ENCODE measurements at regions of chr11 and their contacts with region 1.

Region 1: GRCh38 chr11:113113801-113114706 is 152.8 kb downstream of the NCAM1 start:
- H3K4me3 ChIP-seq: no peak overlapping the region
- H3K27ac ChIP-seq: no peak overlapping the region
- H3K4me1 ChIP-seq: no peaks in the 10 kb centered on the region
- CTCF ChIP-seq: peak; percentile 69

Region 2: GRCh38 chr11:112795142-112795815 is 318.8 kb before region 1 on chr11:
- CTCF ChIA-PET with region 1: interaction called, 15 read pairs
- POLR2A ChIA-PET with region 1: no interaction called
- H3K4me3 ChIP-seq: no peak overlapping the region
- H3K27ac ChIP-seq: no peak overlapping the region
- H3K4me1 ChIP-seq: no peaks in the 10 kb centered on the region
- CTCF ChIP-seq: no peak

Region 3: DNA sequence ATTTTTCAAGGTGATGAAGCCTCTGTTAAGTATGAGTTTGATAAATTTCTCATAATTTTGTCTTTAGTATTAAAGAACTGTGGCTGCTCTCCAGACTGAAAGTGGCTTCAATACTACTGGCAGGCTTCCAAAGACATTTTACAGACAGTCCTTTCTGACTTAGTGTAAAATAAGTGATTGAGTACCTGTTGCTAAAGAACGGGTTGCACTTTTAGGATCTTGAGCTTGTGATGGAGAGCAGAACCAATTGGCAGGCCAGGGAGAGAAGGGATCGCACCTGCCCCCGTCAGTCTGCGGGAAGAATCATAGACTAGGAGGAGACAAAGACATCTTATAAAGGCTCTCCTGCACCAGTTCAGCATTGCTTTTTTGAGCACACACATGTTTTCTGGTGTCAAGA is 148.4 kb before region 1 on chr11:
- CTCF ChIA-PET with region 1: interaction called, 11 read pairs
- POLR2A ChIA-PET with region 1: no interaction called
- H3K4me3 ChIP-seq: no peak overlapping the region
- H3K27ac ChIP-seq: no peak overlapping the region
- H3K4me1 ChIP-seq: peaks cover 11% of the 10 kb centered on the region
- CTCF ChIP-seq: no peak

Region 4: DNA sequence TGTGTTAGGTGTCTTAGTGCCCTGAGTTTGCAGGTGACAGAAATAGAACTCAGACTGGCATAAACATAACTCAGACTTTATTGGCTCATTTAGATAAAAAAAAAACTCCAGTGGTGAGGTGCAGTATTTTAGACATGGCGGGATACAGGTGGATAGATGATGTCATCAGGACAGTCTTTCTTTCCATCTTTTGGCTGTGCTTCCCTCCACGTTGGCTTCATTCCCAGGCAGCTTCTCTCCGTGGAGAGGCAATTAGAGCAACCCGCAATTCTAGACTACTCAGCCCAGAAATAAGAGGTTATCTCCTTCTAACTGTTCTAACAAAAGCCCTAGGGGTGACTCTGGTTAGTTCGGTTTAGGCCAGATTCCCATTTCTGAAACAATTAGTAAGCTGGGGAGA is 112.3 kb before region 1 on chr11:
- CTCF ChIA-PET with region 1: no interaction called
- POLR2A ChIA-PET with region 1: no interaction called
- H3K4me3 ChIP-seq: no peak overlapping the region
- H3K27ac ChIP-seq: no peak overlapping the region
- H3K4me1 ChIP-seq: no peaks in the 10 kb centered on the region
- CTCF ChIP-seq: no peak

Region 5: GRCh38 chr11:113222241-113222640 is 108.2 kb after region 1 on chr11:
- CTCF ChIA-PET with region 1: no interaction called
- POLR2A ChIA-PET with region 1: no interaction called
- H3K4me3 ChIP-seq: no peak overlapping the region
- H3K27ac ChIP-seq: no peak overlapping the region
- H3K4me1 ChIP-seq: no peaks in the 10 kb centered on the region
- CTCF ChIP-seq: no peak

Region 6: GRCh38 chr11:113289431-113290187 is 175.6 kb after region 1 on chr11:
- CTCF ChIA-PET with region 1: interaction called, 18 read pairs
- POLR2A ChIA-PET with region 1: no interaction called
- H3K4me3 ChIP-seq: no peak overlapping the region
- H3K27ac ChIP-seq: no peak overlapping the region
- H3K4me1 ChIP-seq: no peaks in the 10 kb centered on the region
- CTCF ChIP-seq: peak; percentile 69